Aorta (tissue), 5 donors: ENCODE measurements at regions of chr3 and their contacts with region 1.

Region 1: GRCh38 chr3:65439641-65440284 is 599.0 kb downstream of the MAGI1 start:
- DNase-seq: peak in 1 of 2 donors; percentile 79
- ATAC-seq: peak; percentile 63
- H3K4me3 ChIP-seq: no peak overlapping the region
- H3K27ac ChIP-seq: no peak overlapping the region
- H3K4me1 ChIP-seq: no peaks in the 10 kb centered on the region
- H3K27me3 ChIP-seq: no peaks in the 10 kb centered on the region

Region 2: DNA sequence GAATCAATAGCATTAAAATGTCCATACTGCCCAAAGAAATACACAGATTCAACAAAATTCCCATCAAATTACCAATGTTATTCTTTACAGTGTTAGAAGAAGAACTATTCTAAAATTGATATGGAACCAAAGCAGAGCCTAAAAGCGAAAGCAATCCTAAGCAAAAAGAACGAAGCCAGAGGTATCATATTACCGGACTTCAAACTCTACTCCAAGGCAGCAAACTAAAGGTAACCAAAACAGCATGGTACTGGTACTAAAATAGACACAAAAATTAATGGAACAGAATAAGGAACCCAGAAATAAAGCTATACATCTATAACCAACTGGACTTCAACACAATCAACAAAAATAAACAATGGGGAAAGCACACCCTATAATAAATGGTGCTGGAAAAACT is 919.4 kb before region 1 on chr3:
- intact Hi-C with region 1: loop called in 1 of 2 experiments (anchors 10 kb)
- DNase-seq: no peak
- ATAC-seq: no peak
- H3K4me3 ChIP-seq: no peak overlapping the region
- H3K27ac ChIP-seq: no peak overlapping the region
- H3K4me1 ChIP-seq: no peaks in the 10 kb centered on the region
- H3K27me3 ChIP-seq: no peaks in the 10 kb centered on the region

Region 3: DNA sequence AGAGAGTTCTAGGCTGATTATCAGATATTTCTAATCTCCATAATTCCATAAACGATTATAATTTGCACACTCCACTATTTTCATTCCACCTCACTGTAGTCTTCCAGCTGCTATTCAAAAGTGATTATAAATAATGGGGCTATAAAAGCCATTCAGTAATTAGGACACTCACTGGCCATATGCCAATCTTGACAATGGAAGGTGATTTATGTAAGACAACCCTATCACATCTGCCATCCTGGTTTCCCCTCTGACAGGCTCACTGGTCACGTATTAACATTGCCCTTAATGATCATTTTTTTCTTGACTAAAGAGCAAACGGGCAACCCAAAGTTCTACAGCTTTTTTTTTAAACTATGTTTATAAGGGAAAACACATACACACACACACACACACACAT is 196.6 kb after region 1 on chr3:
- intact Hi-C with region 1: no loop called
- DNase-seq: no peak
- ATAC-seq: no peak
- H3K4me3 ChIP-seq: no peak overlapping the region
- H3K27ac ChIP-seq: no peak overlapping the region
- H3K4me1 ChIP-seq: peaks cover 3 to 5% of the 10 kb centered on the region in 2 donors
- H3K27me3 ChIP-seq: no peaks in the 10 kb centered on the region

Region 4: GRCh38 chr3:65672871-65673815 is 233.4 kb after region 1 on chr3:
- intact Hi-C with region 1: loop called (anchors 2 to 10 kb)
- DNase-seq: peak; percentile 56 to 88
- ATAC-seq: no peak
- H3K4me3 ChIP-seq: no peak overlapping the region
- H3K27ac ChIP-seq: no peak overlapping the region
- H3K4me1 ChIP-seq: peaks cover 0 to 3% of the 10 kb centered on the region in 2 donors
- H3K27me3 ChIP-seq: no peaks in the 10 kb centered on the region

Region 5: GRCh38 chr3:65732051-65732935 is 292.5 kb after region 1 on chr3:
- intact Hi-C with region 1: loop called (anchors 5 kb)
- DNase-seq: no peak
- ATAC-seq: peak; percentile 77
- H3K4me3 ChIP-seq: no peak overlapping the region
- H3K27ac ChIP-seq: no peak overlapping the region
- H3K4me1 ChIP-seq: no peaks in the 10 kb centered on the region
- H3K27me3 ChIP-seq: no peaks in the 10 kb centered on the region